Testis (tissue), 5 donors: ENCODE measurements at regions of chr19 and their contacts with region 1.

Region 1: GRCh38 chr19:6220418-6221221 is 59.2 kb downstream of the MLLT1 start:
- DNase-seq: peak; percentile 71
- H3K4me3 ChIP-seq: no peak overlapping the region
- H3K27ac ChIP-seq: peak overlapping the region in 1 of 2 donors; percentile 59
- H3K4me1 ChIP-seq: peaks cover 55% of the 10 kb centered on the region
- H3K27me3 ChIP-seq: no peaks in the 10 kb centered on the region
- CTCF ChIP-seq: no peak
- POLR2A ChIP-seq: no peak

Region 2: DNA sequence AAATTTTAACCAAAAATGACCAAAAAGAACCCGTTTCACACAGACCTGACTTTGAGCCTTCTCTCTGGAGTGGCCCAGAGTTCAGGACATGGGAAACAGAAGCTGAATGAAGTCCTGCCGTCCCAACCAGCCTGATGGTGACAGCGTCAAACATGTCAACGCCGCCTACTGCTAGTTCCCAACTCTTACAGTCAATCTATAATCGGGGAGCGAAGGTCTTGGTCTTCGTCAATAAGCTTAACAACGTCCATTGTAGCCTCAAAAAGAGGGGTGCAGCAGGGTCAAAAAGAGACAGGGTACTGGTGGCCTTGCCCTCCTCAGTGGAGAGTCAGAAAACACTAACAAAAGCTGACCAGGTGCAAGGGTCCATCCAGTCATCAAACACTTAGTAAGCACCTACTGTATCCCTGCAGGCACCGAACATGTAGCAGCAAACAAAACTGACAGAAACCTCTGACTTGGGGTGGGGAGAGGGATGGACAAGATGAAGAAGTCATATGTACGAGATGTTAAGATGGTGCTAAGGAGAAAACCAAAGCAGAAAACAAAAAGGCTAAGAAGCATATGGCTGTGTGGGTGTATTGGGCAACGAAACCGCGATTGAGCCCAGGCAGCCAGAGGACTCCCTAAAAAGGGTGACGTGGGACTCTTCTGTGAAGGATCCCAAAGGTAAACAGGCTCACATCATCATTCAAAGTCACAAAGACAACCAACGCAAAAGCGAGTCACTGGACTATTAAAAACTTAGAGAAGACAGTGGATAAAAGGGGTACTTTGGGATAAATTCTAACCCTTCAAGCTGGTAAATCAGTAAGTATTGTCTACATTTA is 47.1 kb after region 1 on chr19:
- intact Hi-C with region 1: no loop called
- DNase-seq: no peak
- H3K4me3 ChIP-seq: no peak overlapping the region
- H3K27ac ChIP-seq: no peak overlapping the region
- H3K4me1 ChIP-seq: peaks cover 24% of the 10 kb centered on the region
- H3K27me3 ChIP-seq: no peaks in the 10 kb centered on the region
- CTCF ChIP-seq: no peak
- POLR2A ChIP-seq: no peak

Region 3: GRCh38 chr19:6279931-6280591 is 59.4 kb after region 1 on chr19 and contains the start of gene MLLT1:
- intact Hi-C with region 1: loop called (anchors 5 kb)
- DNase-seq: peak; percentile 94
- H3K4me3 ChIP-seq: peak within 1 kb of the TSS; percentile 66 to 74
- H3K27ac ChIP-seq: peak within 1 kb of the TSS; percentile 55 to 75
- H3K4me1 ChIP-seq: peaks cover 17% of the 10 kb centered on the region
- H3K27me3 ChIP-seq: no peaks in the 10 kb centered on the region
- CTCF ChIP-seq: peak in 2 of 3 experiments; percentile 39 to 60
- POLR2A ChIP-seq: no peak
- total RNA-seq, gene MLLT1: 17.3 to 22.4 TPM

Region 4: GRCh38 chr19:6318772-6319171 is 98.2 kb after region 1 on chr19:
- intact Hi-C with region 1: no loop called
- DNase-seq: no peak
- H3K4me3 ChIP-seq: no peak overlapping the region
- H3K27ac ChIP-seq: no peak overlapping the region
- H3K4me1 ChIP-seq: no peaks in the 10 kb centered on the region
- H3K27me3 ChIP-seq: no peaks in the 10 kb centered on the region
- CTCF ChIP-seq: no peak
- POLR2A ChIP-seq: no peak

Region 5: DNA sequence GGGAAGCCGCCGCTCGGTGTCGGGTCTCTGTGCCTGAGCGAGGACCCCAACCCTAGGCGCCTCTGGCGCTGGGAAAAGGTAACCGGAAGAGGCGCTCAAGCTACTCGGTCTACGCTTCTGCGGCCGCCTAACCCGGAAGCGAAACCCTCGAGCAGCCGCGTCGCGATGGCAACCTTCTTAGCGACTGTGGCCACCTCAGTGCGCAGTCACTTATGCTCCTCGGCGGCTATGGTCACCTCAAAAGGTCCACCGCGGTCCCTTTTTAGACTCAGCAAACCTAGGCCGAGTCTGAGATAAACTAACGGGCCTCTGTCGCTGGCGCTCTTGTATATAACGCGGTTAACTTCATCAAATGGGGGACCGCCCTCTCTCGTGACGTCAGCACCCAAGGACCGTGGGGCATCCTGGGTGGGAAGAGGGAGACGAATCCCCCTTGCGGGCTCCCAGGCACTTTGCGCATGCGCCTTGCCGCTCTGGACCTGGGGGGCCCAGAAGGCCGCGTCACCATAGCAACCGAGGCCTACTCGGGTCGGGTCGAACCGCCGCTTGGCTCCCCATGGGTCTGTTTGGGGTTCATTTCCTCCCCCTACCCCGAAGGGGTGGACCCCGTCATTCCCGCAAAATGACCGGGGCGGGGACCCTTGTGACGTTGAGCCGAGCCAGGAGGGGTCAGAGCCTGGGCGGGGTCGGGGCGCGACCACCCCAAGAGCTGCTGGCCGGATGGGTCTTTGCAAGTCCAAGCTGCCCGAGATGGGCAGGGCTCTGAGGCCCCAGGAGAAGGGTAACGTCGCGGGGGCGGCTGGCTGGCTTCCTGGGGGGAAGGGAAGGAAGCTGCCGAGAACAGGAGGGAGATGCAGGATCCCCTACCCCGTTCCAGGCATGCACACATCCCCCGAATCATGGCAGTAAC is 172.7 kb after region 1 on chr19 and contains the start of gene GTF2F1:
- intact Hi-C with region 1: no loop called
- DNase-seq: peak; percentile 97
- H3K4me3 ChIP-seq: peak within 1 kb of the TSS; percentile 75 to 97
- H3K27ac ChIP-seq: peak within 1 kb of the TSS; percentile 95
- H3K4me1 ChIP-seq: peaks cover 7% of the 10 kb centered on the region
- H3K27me3 ChIP-seq: no peaks in the 10 kb centered on the region
- CTCF ChIP-seq: peak in 1 of 3 experiments; percentile 1
- POLR2A ChIP-seq: no peak
- total RNA-seq, gene GTF2F1: 78.1 to 81.1 TPM